H1 (cell line): ENCODE measurements at regions of chr7 and their contacts with region 1.

Region 1: DNA sequence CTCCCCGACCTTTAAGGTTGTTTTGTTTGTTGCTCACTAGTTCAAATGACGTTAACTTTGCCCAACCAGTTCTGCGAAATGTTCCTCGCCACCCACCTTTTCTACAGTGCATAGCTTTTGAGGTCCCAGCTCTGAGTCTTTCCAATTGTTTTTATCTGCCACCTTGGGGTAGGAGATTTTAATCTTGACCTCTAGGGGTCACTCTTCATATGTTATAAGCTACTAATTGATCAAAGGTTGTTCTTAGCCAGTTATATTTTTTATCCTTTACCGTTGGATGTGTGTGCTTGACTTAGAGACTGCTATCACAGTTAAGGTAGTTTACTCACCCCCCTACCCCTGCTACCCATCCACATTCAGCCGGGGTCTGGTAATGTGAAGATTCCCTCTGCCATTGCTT is 372.4 kb downstream of the SUGCT start:
- DNase-seq: no peak
- H3K4me3 ChIP-seq: no peak overlapping the region
- H3K27ac ChIP-seq: no peak overlapping the region
- H3K4me1 ChIP-seq: peaks cover 0 to 3% (median 0%) of the 10 kb centered on the region in 4 experiments; a peak in 1 of 7 replicates
- H3K27me3 ChIP-seq: no peaks in the 10 kb centered on the region
- CTCF ChIP-seq: peak in 2 of 3 experiments; percentile 15 to 37; a peak in 2 of 4 replicates
- EP300 ChIP-seq: no peak
- POLR2A ChIP-seq: no peak
- RAD21 ChIP-seq: peak; percentile 39 to 47

Region 2: GRCh38 chr7:40483630-40484029 is 23.5 kb before region 1 on chr7:
- CTCF ChIA-PET with region 1: interaction called, 11 read pairs
- POLR2A ChIA-PET with region 1: no interaction called
- DNase-seq: no peak
- H3K4me3 ChIP-seq: no peak overlapping the region
- H3K27ac ChIP-seq: no peak overlapping the region
- H3K4me1 ChIP-seq: no peaks in the 10 kb centered on the region
- H3K27me3 ChIP-seq: no peaks in the 10 kb centered on the region
- CTCF ChIP-seq: no peak
- EP300 ChIP-seq: no peak
- POLR2A ChIP-seq: no peak
- RAD21 ChIP-seq: no peak

Region 3: DNA sequence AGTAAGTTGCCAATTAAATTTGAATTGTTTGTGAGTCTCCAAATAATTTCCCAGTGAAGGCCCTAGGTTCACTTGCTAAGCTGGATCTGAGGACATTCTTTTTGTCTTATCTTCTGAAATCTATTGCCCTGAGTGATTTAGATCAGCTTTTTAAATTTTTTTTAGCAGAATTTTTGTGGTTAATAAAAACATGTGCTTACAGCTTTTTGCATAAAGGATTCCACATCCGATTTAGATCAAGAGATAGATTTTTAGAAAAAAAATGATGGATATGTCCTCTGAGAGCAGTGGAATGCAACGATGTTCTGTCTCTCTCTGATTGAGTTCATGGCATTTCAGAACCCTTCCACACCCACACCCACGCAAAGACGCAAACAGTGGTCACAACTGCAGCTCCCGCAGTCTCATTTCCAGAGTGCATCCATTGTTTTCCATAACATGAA is 13.5 kb before region 1 on chr7:
- CTCF ChIA-PET with region 1: interaction called, 19 read pairs
- POLR2A ChIA-PET with region 1: no interaction called
- DNase-seq: no peak
- H3K4me3 ChIP-seq: no peak overlapping the region
- H3K27ac ChIP-seq: no peak overlapping the region
- H3K4me1 ChIP-seq: no peaks in the 10 kb centered on the region
- H3K27me3 ChIP-seq: no peaks in the 10 kb centered on the region
- CTCF ChIP-seq: no peak
- EP300 ChIP-seq: no peak
- POLR2A ChIP-seq: no peak
- RAD21 ChIP-seq: no peak